Naive thymus-derived CD4-positive, alpha-beta T cell (primary cell): ENCODE measurements at regions of chr1 and their contacts with region 1.

Region 1: DNA sequence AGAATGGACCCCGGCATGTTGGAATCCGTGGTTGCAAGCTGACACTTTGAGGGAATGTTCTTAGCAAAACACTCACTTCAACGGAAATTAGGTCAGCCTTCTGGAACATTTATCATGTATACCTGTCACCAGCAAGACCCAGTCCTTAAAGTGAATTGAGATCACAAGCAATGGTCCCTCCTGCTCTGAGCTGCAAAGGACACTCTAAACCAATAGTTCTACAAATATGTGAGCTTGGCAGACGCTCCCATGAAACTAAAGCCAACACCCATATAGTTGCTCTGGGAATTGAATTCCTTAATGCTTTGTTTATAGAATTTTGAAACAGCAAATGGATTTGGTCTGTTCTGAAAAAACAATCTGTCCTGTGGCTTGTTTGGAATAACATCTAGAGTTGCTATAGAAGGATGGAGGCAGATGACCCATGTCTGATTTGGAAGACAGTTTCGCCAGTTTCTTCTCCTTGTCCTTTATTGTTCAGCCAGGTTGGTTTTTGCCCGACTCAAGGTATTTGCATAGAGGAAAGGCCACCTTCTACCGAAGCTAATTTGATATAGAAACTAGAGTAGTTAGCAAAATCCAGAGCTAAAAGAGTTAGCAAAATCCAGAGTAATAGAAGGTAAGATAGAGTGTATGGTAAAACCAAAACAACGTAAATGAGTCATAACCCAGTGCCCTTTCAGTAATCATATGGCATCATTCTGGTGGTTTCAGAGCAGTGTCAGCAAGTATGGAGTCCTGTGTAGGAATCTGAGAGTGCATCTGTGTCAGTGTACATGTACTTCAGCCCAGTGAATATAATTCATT is 236.2 kb downstream of the NFIA start:
- DNase-seq: no peak
- ATAC-seq: no peak
- H3K4me3 ChIP-seq: no peak overlapping the region
- H3K4me3 Mint-ChIP-seq: peak overlapping the region in 1 of 10 donors; percentile 44
- H3K27ac ChIP-seq: no peak overlapping the region
- H3K27ac Mint-ChIP-seq: peak overlapping the region in 1 of 9 donors; percentile 56
- H3K4me1 ChIP-seq: no peaks in the 10 kb centered on the region
- H3K4me1 Mint-ChIP-seq: peaks cover 0 to 15% (median 0%) of the 10 kb centered on the region in 7 donors
- H3K27me3 ChIP-seq: no peaks in the 10 kb centered on the region
- H3K27me3 Mint-ChIP-seq: no peaks in the 10 kb centered on the region

Region 2: GRCh38 chr1:61109158-61109557 is 209.4 kb before region 1 on chr1:
- CTCF ChIA-PET with region 1: no interaction called
- POLR2A ChIA-PET with region 1: no interaction called
- intact Hi-C with region 1: no loop called
- DNase-seq: peak in 1 of 9 donors; percentile 8
- ATAC-seq: no peak
- H3K4me3 ChIP-seq: no peak overlapping the region
- H3K4me3 Mint-ChIP-seq: no peak overlapping the region
- H3K27ac ChIP-seq: no peak overlapping the region
- H3K27ac Mint-ChIP-seq: no peak overlapping the region
- H3K4me1 ChIP-seq: no peaks in the 10 kb centered on the region
- H3K4me1 Mint-ChIP-seq: peaks cover 0 to 11% (median 4%) of the 10 kb centered on the region in 7 donors
- H3K27me3 ChIP-seq: no peaks in the 10 kb centered on the region
- H3K27me3 Mint-ChIP-seq: peaks cover 0 to 20% (median 0%) of the 10 kb centered on the region in 5 donors

Region 3: GRCh38 chr1:61301824-61302657 is 16.5 kb before region 1 on chr1:
- CTCF ChIA-PET with region 1: interaction called, 4 read pairs
- POLR2A ChIA-PET with region 1: no interaction called
- intact Hi-C with region 1: loop called in 1 of 2 experiments (anchors 1 kb)
- DNase-seq: no peak
- ATAC-seq: no peak
- H3K4me3 ChIP-seq: no peak overlapping the region
- H3K4me3 Mint-ChIP-seq: peak overlapping the region in 1 of 10 donors; percentile 20
- H3K27ac ChIP-seq: no peak overlapping the region
- H3K27ac Mint-ChIP-seq: peak overlapping the region in 1 of 9 donors; percentile 86
- H3K4me1 ChIP-seq: no peaks in the 10 kb centered on the region
- H3K4me1 Mint-ChIP-seq: peaks cover 0 to 24% (median 0%) of the 10 kb centered on the region in 7 donors
- H3K27me3 ChIP-seq: no peaks in the 10 kb centered on the region
- H3K27me3 Mint-ChIP-seq: peaks cover 0 to 4% (median 0%) of the 10 kb centered on the region in 5 donors

Region 4: GRCh38 chr1:61332196-61332753 is 13.8 kb after region 1 on chr1:
- CTCF ChIA-PET with region 1: no interaction called
- POLR2A ChIA-PET with region 1: no interaction called
- intact Hi-C with region 1: loop called in 1 of 2 experiments (anchors 1 kb)
- DNase-seq: no peak
- ATAC-seq: no peak
- H3K4me3 ChIP-seq: no peak overlapping the region
- H3K4me3 Mint-ChIP-seq: no peak overlapping the region
- H3K27ac ChIP-seq: no peak overlapping the region
- H3K27ac Mint-ChIP-seq: peak overlapping the region in 1 of 9 donors; percentile 53
- H3K4me1 ChIP-seq: no peaks in the 10 kb centered on the region
- H3K4me1 Mint-ChIP-seq: peaks cover 0 to 10% (median 0%) of the 10 kb centered on the region in 7 donors
- H3K27me3 ChIP-seq: no peaks in the 10 kb centered on the region
- H3K27me3 Mint-ChIP-seq: peaks cover 0 to 3% (median 0%) of the 10 kb centered on the region in 5 donors